Left colon (tissue), 2 donors: ENCODE measurements at regions of chr17 and their contacts with region 1.

Region 1: DNA sequence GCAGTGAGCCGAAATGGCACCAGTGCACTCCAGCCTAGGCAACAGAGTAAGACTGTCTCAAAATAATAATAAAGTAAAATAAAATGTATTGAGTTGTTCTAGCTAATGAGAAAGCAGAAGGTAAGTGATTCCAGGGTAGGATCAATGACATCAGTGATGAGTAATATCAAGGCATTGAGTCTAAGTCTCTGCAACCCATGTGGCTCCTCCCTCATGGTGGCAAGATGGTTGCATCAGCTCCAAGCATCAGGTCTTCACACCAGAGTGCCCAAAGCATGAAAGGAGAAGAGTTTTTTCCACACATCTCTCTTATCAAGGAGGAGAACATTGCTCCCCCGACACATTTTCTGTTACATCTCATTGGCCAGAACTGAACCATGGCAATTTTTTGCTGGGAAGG is 34.8 kb upstream of the GAS7 start:
- DNase-seq: no peak
- ATAC-seq: no peak

Region 2: GRCh38 chr17:9959377-9959981 is 273.7 kb before region 1 on chr17:
- intact Hi-C with region 1: loop called in 1 of 2 experiments (anchors 10 kb)
- DNase-seq: peak in 1 of 2 donors; percentile 32
- ATAC-seq: no peak

Region 3: DNA sequence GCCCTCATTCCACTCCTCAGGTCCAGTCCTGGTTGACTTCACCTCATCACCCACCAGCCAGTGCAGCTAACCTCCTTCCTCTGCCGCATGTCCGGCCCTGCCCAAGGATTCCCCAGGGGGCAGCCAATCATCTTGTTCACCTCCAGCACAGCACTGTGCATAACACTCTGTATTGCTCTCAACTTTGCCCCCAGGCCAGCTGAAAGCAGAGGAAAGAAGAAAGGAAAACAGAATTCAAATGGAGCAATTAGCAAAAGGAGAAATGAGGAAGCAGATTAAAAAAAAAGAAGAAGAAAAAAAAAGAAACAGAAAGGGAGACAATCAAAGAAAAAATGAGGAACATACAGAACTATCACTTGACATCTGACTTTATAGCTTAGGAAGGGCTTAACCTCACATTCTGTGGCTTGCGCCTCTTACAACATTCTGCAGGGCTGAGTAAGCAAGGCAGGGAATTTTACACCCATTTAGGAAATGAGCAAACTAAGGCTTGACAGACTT is 60.9 kb before region 1 on chr17:
- intact Hi-C with region 1: no loop called
- DNase-seq: no peak
- ATAC-seq: no peak